H1 (cell line): ENCODE measurements at regions of chr5 and their contacts with region 1.

Region 1: GRCh38 chr5:135426102-135427082 is 20.8 kb downstream of the DCANP1 start:
- DNase-seq: no peak
- H3K4me3 ChIP-seq: no peak overlapping the region
- H3K27ac ChIP-seq: no peak overlapping the region
- H3K4me1 ChIP-seq: no peaks in the 10 kb centered on the region
- H3K27me3 ChIP-seq: no peaks in the 10 kb centered on the region
- CTCF ChIP-seq: peak in 2 of 3 experiments; percentile 58 to 78; a peak in 3 of 4 replicates
- EP300 ChIP-seq: no peak
- POLR2A ChIP-seq: no peak
- RAD21 ChIP-seq: peak; percentile 57 to 68

Region 2: DNA sequence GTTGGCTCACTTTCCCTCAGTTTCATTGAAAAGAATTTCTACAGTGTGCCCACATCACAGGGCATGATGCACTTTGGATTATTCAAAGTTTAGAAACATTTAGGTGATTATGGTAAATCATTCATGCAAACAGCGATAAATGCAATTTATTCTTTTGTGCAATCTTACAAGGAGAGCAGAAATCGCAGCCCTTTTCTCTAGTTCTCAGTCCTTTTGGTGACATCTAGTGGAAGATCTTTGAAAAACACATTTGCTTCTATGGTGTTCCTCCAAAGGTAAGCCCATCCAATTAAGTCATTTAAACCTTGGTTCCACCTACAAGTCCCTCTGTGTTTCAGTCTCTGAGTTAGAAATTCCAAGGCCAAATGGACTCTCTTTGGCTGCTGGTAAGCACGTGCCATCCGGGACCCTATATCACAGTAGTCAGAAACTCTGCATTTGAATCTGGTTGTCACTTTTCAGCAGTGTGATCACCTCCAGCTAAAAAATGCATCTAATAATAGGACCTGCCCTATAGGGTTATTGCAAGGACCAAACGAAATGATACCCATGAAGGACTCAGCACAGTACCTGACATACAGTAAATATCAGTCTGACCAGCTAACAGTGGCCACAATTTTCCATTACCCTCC is 93.8 kb before region 1 on chr5:
- CTCF ChIA-PET with region 1: interaction called, 17 read pairs
- POLR2A ChIA-PET with region 1: no interaction called
- DNase-seq: no peak
- H3K4me3 ChIP-seq: no peak overlapping the region
- H3K27ac ChIP-seq: no peak overlapping the region
- H3K4me1 ChIP-seq: no peaks in the 10 kb centered on the region
- H3K27me3 ChIP-seq: no peaks in the 10 kb centered on the region
- CTCF ChIP-seq: peak in 2 of 3 experiments; percentile 43 to 57; a peak in 2 of 4 replicates
- EP300 ChIP-seq: no peak
- POLR2A ChIP-seq: no peak
- RAD21 ChIP-seq: peak; percentile 70 to 73

Region 3: GRCh38 chr5:135376961-135377624 is 49.3 kb before region 1 on chr5:
- CTCF ChIA-PET with region 1: interaction called, 14 read pairs
- POLR2A ChIA-PET with region 1: no interaction called
- DNase-seq: no peak
- H3K4me3 ChIP-seq: no peak overlapping the region
- H3K27ac ChIP-seq: no peak overlapping the region
- H3K4me1 ChIP-seq: no peaks in the 10 kb centered on the region
- H3K27me3 ChIP-seq: no peaks in the 10 kb centered on the region
- CTCF ChIP-seq: no peak
- EP300 ChIP-seq: no peak
- POLR2A ChIP-seq: no peak
- RAD21 ChIP-seq: no peak

Region 4: GRCh38 chr5:135400866-135401265 is 25.5 kb before region 1 on chr5:
- CTCF ChIA-PET with region 1: interaction called, 32 read pairs
- POLR2A ChIA-PET with region 1: interaction called, 5 read pairs
- DNase-seq: no peak
- H3K4me3 ChIP-seq: peak overlapping the region in 3 of 4 experiments; percentile 29 to 82 (median 32); a peak in 4 of 8 replicates
- H3K27ac ChIP-seq: no peak overlapping the region
- H3K4me1 ChIP-seq: peaks cover 7 to 24% (median 12%) of the 10 kb centered on the region in 4 experiments
- H3K27me3 ChIP-seq: peaks cover 6 to 35% (median 31%) of the 10 kb centered on the region in 4 experiments
- CTCF ChIP-seq: no peak
- EP300 ChIP-seq: no peak
- POLR2A ChIP-seq: no peak
- RAD21 ChIP-seq: no peak

Region 5: GRCh38 chr5:135443161-135443960 is 17.0 kb after region 1 on chr5:
- CTCF ChIA-PET with region 1: interaction called, 62 read pairs
- POLR2A ChIA-PET with region 1: no interaction called
- DNase-seq: peak in 1 of 2 experiments; percentile 35
- H3K4me3 ChIP-seq: no peak overlapping the region
- H3K27ac ChIP-seq: no peak overlapping the region
- H3K4me1 ChIP-seq: no peaks in the 10 kb centered on the region; a peak in 1 of 7 replicates
- H3K27me3 ChIP-seq: peaks cover 0 to 3% (median 0%) of the 10 kb centered on the region in 4 experiments; a peak in 2 of 7 replicates
- CTCF ChIP-seq: no peak
- EP300 ChIP-seq: no peak
- POLR2A ChIP-seq: no peak
- RAD21 ChIP-seq: no peak